ENCODE measurements at regions of chr1 and their contacts with region 1.

Region 1: GRCh38 chr1:54488779-54489626 is 59.0 kb upstream of the ACOT11 start:
- DNase-seq: peak; percentile 10
- H3K4me3 ChIP-seq: peak overlapping the region; percentile 56
- H3K27ac ChIP-seq: peak overlapping the region; percentile 70
- H3K27me3 ChIP-seq: no peaks in the 10 kb centered on the region
- CTCF ChIP-seq: peak; percentile 85

Region 2: DNA sequence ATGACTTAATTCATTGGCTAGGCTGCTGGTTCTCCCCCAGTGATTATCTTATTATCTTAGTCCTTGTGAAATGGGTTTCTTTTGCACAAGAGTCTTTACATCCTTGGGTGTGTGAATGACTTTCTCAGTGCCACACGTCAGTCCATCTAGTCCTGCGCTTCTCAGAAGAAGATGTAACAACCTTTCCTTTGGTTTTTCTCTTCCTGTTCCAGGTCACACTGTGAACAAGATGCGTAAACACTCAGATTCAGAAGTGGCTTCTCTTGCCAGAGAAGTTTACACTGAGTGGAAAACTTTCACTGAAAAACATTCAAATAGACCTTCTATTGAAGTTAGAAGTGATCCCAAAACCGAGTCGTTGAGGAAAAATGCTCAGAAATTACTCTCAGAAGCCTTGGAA is 400.6 kb before region 1 on chr1:
- CTCF ChIA-PET with region 1: interaction called, 13 read pairs
- POLR2A ChIA-PET with region 1: no interaction called
- DNase-seq: no peak
- H3K4me3 ChIP-seq: no peak overlapping the region
- H3K27ac ChIP-seq: no peak overlapping the region
- H3K27me3 ChIP-seq: no peaks in the 10 kb centered on the region
- CTCF ChIP-seq: no peak

Region 3: DNA sequence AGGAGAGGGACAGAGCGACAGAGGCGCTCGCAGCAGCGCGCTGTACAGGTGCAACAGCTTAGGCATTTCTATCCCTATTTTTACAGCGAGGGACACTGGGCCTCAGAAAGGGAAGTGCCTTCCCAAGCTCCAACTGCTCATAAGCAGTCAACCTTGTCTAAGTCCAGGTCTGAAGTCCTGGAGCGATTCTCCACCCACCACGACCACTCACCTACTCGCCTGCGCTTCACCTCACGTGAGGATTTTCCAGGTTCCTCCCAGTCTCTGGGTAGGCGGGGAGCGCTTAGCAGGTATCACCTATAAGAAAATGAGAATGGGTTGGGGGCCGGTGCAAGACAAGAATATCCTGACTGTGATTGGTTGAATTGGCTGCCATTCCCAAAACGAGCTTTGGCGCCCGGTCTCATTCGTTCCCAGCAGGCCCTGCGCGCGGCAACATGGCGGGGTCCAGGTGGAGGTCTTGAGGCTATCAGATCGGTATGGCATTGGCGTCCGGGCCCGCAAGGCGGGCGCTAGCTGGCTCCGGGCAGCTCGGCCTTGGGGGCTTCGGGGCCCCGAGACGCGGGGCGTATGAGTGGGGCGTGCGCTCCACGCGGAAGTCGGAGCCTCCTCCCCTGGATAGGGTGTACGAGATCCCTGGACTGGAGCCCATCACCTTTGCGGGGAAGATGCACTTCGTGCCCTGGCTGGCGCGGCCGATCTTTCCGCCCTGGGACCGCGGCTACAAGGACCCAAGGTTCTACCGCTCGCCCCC is 289.1 kb before region 1 on chr1 and contains the starts of genes CYB5RL and MRPL37:
- CTCF ChIA-PET with region 1: interaction called, 16 read pairs
- POLR2A ChIA-PET with region 1: interaction called, 4 read pairs
- DNase-seq: peak; percentile 90
- H3K4me3 ChIP-seq: peak within 1 kb of the TSS; percentile 95
- H3K27ac ChIP-seq: peak within 1 kb of the TSS; percentile 11
- H3K27me3 ChIP-seq: no peaks in the 10 kb centered on the region
- CTCF ChIP-seq: no peak
- polyA plus RNA-seq, gene CYB5RL: 4.0 and 4.1 TPM in 2 replicates
- polyA plus RNA-seq, gene MRPL37: 16.6 and 27.9 TPM in 2 replicates

Region 4: GRCh38 chr1:54335755-54336108 is 153.3 kb before region 1 on chr1:
- CTCF ChIA-PET with region 1: interaction called, 23 read pairs
- POLR2A ChIA-PET with region 1: no interaction called
- DNase-seq: peak; percentile 80
- H3K4me3 ChIP-seq: peak overlapping the region; percentile 58
- H3K27ac ChIP-seq: peak overlapping the region; percentile 100
- H3K27me3 ChIP-seq: no peaks in the 10 kb centered on the region
- CTCF ChIP-seq: no peak

Region 5: DNA sequence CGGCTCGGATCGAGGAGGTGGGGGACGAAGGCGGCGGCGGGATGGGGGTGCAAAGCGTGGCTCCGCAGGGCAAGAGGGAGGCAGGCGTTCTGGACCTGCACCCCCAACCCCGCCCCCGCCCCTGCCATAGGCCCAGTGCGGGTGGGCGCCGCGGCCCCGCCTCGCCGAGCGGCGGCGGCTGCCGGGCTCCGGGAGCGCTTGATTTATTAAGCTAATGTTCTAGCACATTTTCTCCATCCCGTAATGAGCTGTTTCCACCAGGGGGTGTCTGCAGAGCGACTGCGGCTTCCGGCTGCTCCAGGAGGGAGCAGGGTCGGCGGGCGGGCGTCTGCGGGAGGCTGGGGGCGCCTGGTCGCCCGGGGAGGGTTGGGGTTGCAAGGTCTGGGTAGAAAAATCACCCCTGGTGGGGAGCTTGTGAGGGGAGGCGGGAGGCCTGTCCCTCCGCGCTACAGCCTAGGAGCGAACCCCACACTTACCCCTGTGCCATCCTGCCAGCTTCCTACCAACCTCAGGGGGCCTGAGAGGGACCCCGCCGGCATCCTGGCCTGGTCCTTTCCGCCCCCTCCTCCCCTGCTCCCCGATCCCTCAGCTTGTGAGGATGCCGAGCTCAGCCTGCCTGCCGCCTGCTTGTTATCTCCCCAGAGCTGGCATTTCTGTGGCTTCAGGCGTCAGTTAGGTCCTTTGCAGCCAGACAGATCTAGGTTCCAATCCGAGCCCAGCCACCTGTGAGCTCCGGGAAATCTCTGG is 10.5 kb after region 1 on chr1:
- CTCF ChIA-PET with region 1: interaction called, 25 read pairs
- POLR2A ChIA-PET with region 1: no interaction called
- DNase-seq: no peak
- H3K4me3 ChIP-seq: peak overlapping the region; percentile 39
- H3K27ac ChIP-seq: no peak overlapping the region
- H3K27me3 ChIP-seq: peaks cover 47% of the 10 kb centered on the region
- CTCF ChIP-seq: peak; percentile 50